ENCODE measurements at regions of chr4 and their contacts with region 1.

Region 1: DNA sequence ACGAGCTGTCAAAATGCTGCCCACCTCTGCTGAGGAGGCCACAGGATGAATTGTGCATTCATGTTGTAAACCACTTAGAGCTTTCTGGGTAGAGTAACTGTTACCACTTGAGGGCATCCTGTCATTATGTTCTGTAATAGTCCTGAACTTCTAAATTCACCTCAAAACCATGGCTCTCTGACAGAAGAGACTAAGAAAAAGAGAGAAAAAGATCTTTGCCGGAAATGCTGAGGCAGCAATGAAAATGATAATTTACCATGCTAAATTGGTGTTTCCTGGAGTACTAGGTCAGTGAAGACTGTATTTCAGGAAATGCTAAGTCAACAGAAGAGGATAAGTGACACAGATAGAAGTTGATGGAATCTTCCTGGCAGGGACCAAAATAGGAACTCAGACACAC is 942.3 kb upstream of the SLIT2 start:
- DNase-seq: peak; percentile 74
- ATAC-seq: peak; percentile 87
- H3K4me3 ChIP-seq: no peak overlapping the region
- H3K27ac ChIP-seq: no peak overlapping the region
- H3K4me1 ChIP-seq: peaks cover 2% of the 10 kb centered on the region; the same call in 1 of the 2 replicates
- H3K27me3 ChIP-seq: no peaks in the 10 kb centered on the region
- CTCF ChIP-seq: peak; percentile 66
- POLR2A ChIP-seq: no peak
- RAD21 ChIP-seq: peak; percentile 76

Region 2: GRCh38 chr4:18917689-18918088 is 391.7 kb before region 1 on chr4:
- CTCF ChIA-PET with region 1: no interaction called
- POLR2A ChIA-PET with region 1: no interaction called
- dilution Hi-C with region 1: no loop called
- in situ Hi-C with region 1: no loop called
- intact Hi-C with region 1: no loop called
- DNase-seq: peak; percentile 23
- ATAC-seq: no peak
- H3K4me3 ChIP-seq: no peak overlapping the region
- H3K27ac ChIP-seq: no peak overlapping the region
- H3K4me1 ChIP-seq: no peaks in the 10 kb centered on the region
- H3K27me3 ChIP-seq: no peaks in the 10 kb centered on the region
- CTCF ChIP-seq: no peak
- POLR2A ChIP-seq: no peak
- RAD21 ChIP-seq: no peak

Region 3: DNA sequence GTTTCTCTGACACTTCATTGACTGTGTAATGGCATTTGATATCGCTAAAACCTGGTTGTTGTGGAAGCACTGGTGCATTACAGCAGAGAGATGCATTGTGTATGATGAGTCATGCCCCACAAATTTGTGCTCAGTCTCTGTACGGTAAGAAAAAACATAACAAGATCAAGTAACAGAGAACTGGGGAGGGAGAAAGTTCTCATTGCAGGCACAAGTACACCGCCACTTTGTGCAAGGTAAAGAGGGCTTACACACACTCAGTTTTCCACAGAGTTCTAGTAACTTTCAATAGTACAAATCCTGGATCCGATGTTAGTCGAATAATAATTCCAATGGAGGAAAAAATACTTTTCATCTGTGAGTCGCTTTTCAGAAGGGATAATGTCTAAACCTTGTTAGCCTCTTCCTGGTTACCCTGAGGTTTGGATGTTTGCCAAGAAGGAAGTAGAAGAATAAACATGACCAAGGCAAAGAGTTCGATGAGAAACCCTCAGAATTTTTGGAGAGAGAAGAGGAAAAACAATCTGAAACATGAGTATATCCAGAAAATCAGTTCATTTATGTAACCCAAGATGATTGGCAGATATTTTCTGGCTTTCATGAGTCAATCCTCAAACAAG is 429.8 kb after region 1 on chr4:
- CTCF ChIA-PET with region 1: no interaction called
- POLR2A ChIA-PET with region 1: no interaction called
- dilution Hi-C with region 1: no loop called
- in situ Hi-C with region 1: no loop called
- intact Hi-C with region 1: loop called (anchors 10 kb)
- DNase-seq: peak; percentile 95
- ATAC-seq: peak; percentile 97
- H3K4me3 ChIP-seq: peak overlapping the region; percentile 14; the same call in 1 of the 2 replicates
- H3K27ac ChIP-seq: peak overlapping the region; percentile 42; the same call in 1 of the 2 replicates
- H3K4me1 ChIP-seq: peaks cover 5% of the 10 kb centered on the region
- H3K27me3 ChIP-seq: no peaks in the 10 kb centered on the region
- CTCF ChIP-seq: no peak
- POLR2A ChIP-seq: no peak
- RAD21 ChIP-seq: peak; percentile 26; the same call in 1 of the 2 replicates

Region 4: DNA sequence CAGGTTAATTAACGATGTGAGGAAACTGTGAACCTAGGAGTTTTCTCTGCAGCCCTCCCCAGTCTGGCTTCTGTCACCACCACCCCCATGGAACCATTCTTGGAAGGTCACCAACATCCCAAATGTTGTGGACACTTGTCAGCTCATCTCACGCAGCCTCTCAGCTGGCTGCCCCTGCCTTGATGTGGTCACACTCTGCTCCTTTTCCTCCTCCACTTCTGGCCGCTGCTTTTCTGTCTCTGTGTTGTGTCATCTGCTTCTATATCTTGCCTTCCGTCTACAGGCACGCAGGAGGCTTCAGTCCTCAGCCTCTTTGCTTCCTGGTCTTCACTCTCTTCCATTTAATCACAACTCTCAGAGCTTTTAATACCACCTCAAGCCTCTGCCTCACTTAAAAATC is 570.8 kb after region 1 on chr4:
- CTCF ChIA-PET with region 1: no interaction called
- POLR2A ChIA-PET with region 1: no interaction called
- dilution Hi-C with region 1: no loop called
- in situ Hi-C with region 1: no loop called
- intact Hi-C with region 1: loop called (anchors 10 kb)
- DNase-seq: peak; percentile 12
- ATAC-seq: no peak
- H3K4me3 ChIP-seq: no peak overlapping the region
- H3K27ac ChIP-seq: no peak overlapping the region
- H3K4me1 ChIP-seq: peaks cover 4% of the 10 kb centered on the region
- H3K27me3 ChIP-seq: no peaks in the 10 kb centered on the region; the same call in 1 of the 2 replicates
- CTCF ChIP-seq: no peak
- POLR2A ChIP-seq: no peak
- RAD21 ChIP-seq: no peak

Region 5: GRCh38 chr4:19971829-19972228 is 662.5 kb after region 1 on chr4:
- CTCF ChIA-PET with region 1: no interaction called
- POLR2A ChIA-PET with region 1: no interaction called
- dilution Hi-C with region 1: no loop called
- in situ Hi-C with region 1: no loop called
- intact Hi-C with region 1: loop called (anchors 1 kb)
- DNase-seq: peak; percentile 45
- ATAC-seq: peak; percentile 21; the same call in 1 of the 2 replicates
- H3K4me3 ChIP-seq: no peak overlapping the region
- H3K27ac ChIP-seq: no peak overlapping the region
- H3K4me1 ChIP-seq: no peaks in the 10 kb centered on the region; the same call in 1 of the 2 replicates
- H3K27me3 ChIP-seq: no peaks in the 10 kb centered on the region
- CTCF ChIP-seq: no peak
- POLR2A ChIP-seq: no peak
- RAD21 ChIP-seq: no peak

Region 6: GRCh38 chr4:20428436-20429160 is 1119.2 kb after region 1 on chr4:
- CTCF ChIA-PET with region 1: no interaction called
- POLR2A ChIA-PET with region 1: no interaction called
- dilution Hi-C with region 1: no loop called
- in situ Hi-C with region 1: no loop called
- intact Hi-C with region 1: loop called (anchors 1 kb)
- DNase-seq: peak; percentile 20
- ATAC-seq: peak; percentile 64
- H3K4me3 ChIP-seq: no peak overlapping the region
- H3K27ac ChIP-seq: no peak overlapping the region
- H3K4me1 ChIP-seq: no peaks in the 10 kb centered on the region; the same call in 1 of the 2 replicates
- H3K27me3 ChIP-seq: no peaks in the 10 kb centered on the region
- CTCF ChIP-seq: peak; percentile 50
- POLR2A ChIP-seq: no peak
- RAD21 ChIP-seq: peak; percentile 59